ENCODE measurements at regions of chr10 and their contacts with region 1.

Region 1: GRCh38 chr10:30736685-30737232 is 107.2 kb upstream of the LYZL2 start:
- DNase-seq: peak; percentile 91
- ATAC-seq: peak; percentile 96
- H3K4me3 Mint-ChIP-seq: no peak overlapping the region
- H3K27ac Mint-ChIP-seq: peak overlapping the region; percentile 87
- H3K4me1 Mint-ChIP-seq: peaks cover 44% of the 10 kb centered on the region
- H3K27me3 Mint-ChIP-seq: no peaks in the 10 kb centered on the region

Region 2: GRCh38 chr10:30701451-30702173 is 35.1 kb before region 1 on chr10:
- CTCF ChIA-PET with region 1: interaction called, 11 read pairs
- DNase-seq: peak; percentile 93
- ATAC-seq: peak; percentile 72
- H3K4me3 Mint-ChIP-seq: peak overlapping the region; percentile 84
- H3K27ac Mint-ChIP-seq: peak overlapping the region; percentile 99
- H3K4me1 Mint-ChIP-seq: peaks cover 82% of the 10 kb centered on the region
- H3K27me3 Mint-ChIP-seq: no peaks in the 10 kb centered on the region

Region 3: DNA sequence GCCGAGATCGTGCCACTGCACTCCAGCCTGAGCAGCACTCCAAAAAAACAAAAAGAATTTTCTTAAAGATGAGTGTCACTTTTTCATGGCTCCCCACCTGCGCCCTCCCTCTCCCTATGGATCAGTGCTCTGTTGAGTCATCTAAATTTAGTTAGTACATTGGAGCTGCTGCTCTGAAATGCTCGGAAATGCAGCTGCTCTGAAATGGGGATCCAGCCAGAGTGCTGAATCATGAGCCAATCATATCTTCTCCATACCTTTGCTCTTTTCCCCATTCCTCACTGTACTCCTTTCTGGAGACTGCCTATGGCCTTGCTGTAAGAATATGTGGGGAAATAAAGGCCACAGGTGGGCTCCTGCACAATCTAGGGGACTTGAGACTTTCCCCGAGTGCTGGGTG is 106.1 kb after region 1 on chr10:
- CTCF ChIA-PET with region 1: no interaction called
- DNase-seq: no peak
- ATAC-seq: no peak
- H3K4me3 Mint-ChIP-seq: no peak overlapping the region
- H3K27ac Mint-ChIP-seq: no peak overlapping the region
- H3K4me1 Mint-ChIP-seq: no peaks in the 10 kb centered on the region
- H3K27me3 Mint-ChIP-seq: no peaks in the 10 kb centered on the region

Region 4: GRCh38 chr10:30857803-30858202 is 121.0 kb after region 1 on chr10:
- CTCF ChIA-PET with region 1: no interaction called
- DNase-seq: no peak
- ATAC-seq: no peak
- H3K4me3 Mint-ChIP-seq: no peak overlapping the region
- H3K27ac Mint-ChIP-seq: no peak overlapping the region
- H3K4me1 Mint-ChIP-seq: no peaks in the 10 kb centered on the region
- H3K27me3 Mint-ChIP-seq: no peaks in the 10 kb centered on the region

Measured in activated CD8-positive, alpha-beta memory T cell treated with anti-CD3 and anti-CD28 coated beads, Interleukin-2, amount 10 ng/mL, durations not matched to agents 7 days and 5 days (primary cell).